ENCODE measurements at regions of chr19 and their contacts with region 1.

Region 1: DNA sequence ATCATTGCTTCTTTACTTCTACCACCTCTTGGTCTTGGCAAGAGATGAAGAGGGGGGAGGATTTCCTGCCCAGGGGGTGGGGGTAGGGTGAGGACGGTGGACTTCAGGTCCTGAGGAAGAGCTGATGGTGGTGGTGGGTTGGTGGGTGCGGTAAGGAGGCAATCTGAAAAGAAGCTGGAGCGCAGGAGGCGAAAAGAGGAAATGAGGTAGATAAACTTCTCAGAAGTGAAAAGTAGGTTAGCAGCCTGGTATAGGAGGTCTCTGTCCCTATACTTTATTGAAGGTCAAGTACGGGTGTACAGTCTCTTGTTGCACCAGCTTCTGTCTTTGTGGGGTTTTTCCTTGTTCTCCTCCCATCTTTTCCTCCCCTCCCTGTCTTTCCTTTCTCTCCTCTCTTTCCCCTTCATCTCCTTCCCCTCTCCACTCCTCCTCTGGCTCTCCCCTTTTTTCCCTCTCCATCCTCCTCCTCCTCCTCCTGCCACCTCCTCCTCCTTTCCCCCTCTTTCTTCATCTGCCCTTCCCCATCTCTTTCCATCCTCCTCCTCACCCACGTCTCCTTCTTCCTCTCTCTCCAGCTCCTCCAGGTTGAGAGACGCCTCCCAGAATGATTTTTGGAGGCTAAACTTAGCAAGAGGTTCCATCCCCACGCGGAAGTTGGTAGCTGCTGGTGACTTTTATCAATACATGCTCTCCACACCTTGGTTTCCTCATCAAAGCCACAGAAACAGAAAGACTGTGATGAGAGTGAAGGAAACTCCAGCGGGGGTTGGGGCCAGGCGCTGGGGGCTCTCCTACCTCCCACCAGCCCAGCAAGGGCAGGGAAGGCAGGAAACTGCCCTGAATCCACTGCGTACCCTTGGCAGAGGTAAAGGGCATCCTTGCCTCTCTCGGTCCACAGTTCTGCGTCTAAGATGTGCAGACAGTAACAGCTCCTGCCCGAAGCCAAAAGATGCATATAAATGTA is 15.3 kb downstream of the TNFSF14 start:
- DNase-seq: peak; percentile 87
- ATAC-seq: peak; percentile 83
- H3K4me3 Mint-ChIP-seq: peak overlapping the region; percentile 70
- H3K27ac Mint-ChIP-seq: peak overlapping the region; percentile 96
- H3K4me1 Mint-ChIP-seq: peaks cover 57% of the 10 kb centered on the region
- H3K27me3 Mint-ChIP-seq: no peaks in the 10 kb centered on the region

Region 2: GRCh38 chr19:6632002-6632621 is 22.5 kb before region 1 on chr19:
- CTCF ChIA-PET with region 1: interaction called, 46 read pairs
- DNase-seq: peak; percentile 89
- ATAC-seq: peak; percentile 85
- H3K4me3 Mint-ChIP-seq: no peak overlapping the region
- H3K27ac Mint-ChIP-seq: peak overlapping the region; percentile 52
- H3K4me1 Mint-ChIP-seq: peaks cover 30% of the 10 kb centered on the region
- H3K27me3 Mint-ChIP-seq: no peaks in the 10 kb centered on the region

Region 3: GRCh38 chr19:6639439-6639838 is 15.2 kb before region 1 on chr19:
- CTCF ChIA-PET with region 1: interaction called, 56 read pairs
- DNase-seq: peak; percentile 84
- ATAC-seq: peak; percentile 87
- H3K4me3 Mint-ChIP-seq: no peak overlapping the region
- H3K27ac Mint-ChIP-seq: peak overlapping the region; percentile 38
- H3K4me1 Mint-ChIP-seq: peaks cover 47% of the 10 kb centered on the region
- H3K27me3 Mint-ChIP-seq: no peaks in the 10 kb centered on the region

Region 4: DNA sequence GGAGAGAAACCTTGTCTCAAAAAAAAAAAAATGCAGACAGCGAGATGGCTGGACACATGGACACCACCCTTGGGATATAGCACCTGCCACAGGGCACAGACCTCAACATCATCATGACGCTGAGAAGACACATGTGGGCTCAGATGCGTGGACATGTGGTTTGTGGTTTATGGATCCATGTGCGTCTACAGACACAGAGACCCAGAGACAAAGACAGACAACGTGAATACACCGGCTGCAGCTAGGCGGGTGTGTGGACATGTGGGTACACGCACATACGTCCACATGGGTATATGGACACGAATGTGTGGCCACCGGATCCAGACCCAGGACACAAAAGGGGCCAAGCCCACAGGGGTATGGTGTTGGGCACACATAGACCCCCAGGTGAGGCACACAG is 14.1 kb after region 1 on chr19:
- CTCF ChIA-PET with region 1: interaction called, 11 read pairs
- DNase-seq: peak; percentile 58
- ATAC-seq: no peak
- H3K4me3 Mint-ChIP-seq: peak overlapping the region; percentile 99
- H3K27ac Mint-ChIP-seq: peak overlapping the region; percentile 90
- H3K4me1 Mint-ChIP-seq: peaks cover 44% of the 10 kb centered on the region
- H3K27me3 Mint-ChIP-seq: peaks cover 9% of the 10 kb centered on the region

Measured in activated CD8-positive, alpha-beta memory T cell treated with anti-CD3 and anti-CD28 coated beads, Interleukin-2, amount 10 ng/mL, durations not matched to agents 7 days and 5 days (primary cell).